ENCODE measurements at regions of chr15 and their contacts with region 1.

Region 1: DNA sequence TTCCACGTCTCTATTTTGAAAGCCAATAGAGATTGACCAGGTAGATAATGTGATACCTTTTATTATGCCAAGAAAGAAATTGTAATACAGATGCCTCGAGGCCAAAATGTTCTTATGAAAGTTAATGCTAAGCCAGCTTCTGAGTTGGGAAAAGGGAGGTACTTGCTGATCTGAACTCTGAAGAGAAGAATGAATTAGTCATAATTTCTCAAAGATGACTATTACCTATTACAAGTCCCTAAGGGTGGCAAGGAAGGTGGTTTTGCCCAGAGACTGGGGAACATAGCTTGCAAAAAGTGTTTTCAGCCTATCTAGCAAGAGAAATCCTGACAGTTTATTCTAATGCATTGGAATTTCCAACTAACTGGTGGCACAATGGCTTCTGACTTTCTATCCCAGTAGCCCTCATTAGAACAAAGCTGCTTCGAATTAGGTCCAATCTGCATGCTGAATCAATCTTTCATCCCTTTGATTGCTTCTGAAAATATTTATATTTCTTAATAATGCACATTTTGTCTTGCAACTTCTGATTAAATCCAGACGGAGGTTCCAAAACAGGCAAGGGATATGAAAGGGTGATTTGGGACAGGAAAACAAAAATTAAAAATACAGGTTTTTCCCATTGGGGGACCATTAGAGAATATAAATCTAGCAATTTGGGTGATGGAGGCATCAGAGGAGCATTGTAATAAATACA is 17.7 kb upstream of the NR2F2 start:
- DNase-seq: peak in 1 of 2 experiments; percentile 85
- H3K4me3 ChIP-seq: no peak overlapping the region
- H3K27ac ChIP-seq: peak overlapping the region; percentile 51
- H3K4me1 ChIP-seq: peaks cover 17% of the 10 kb centered on the region
- H3K27me3 ChIP-seq: no peaks in the 10 kb centered on the region
- CTCF ChIP-seq: no peak

Region 2: GRCh38 chr15:96585484-96586386 is 272.9 kb after region 1 on chr15:
- CTCF ChIA-PET with region 1: interaction called, 13 read pairs
- POLR2A ChIA-PET with region 1: no interaction called
- intact Hi-C with region 1: no loop called
- DNase-seq: no peak
- H3K4me3 ChIP-seq: no peak overlapping the region
- H3K27ac ChIP-seq: no peak overlapping the region
- H3K4me1 ChIP-seq: no peaks in the 10 kb centered on the region
- H3K27me3 ChIP-seq: no peaks in the 10 kb centered on the region
- CTCF ChIP-seq: peak; percentile 37; the same call in 1 of the 2 replicates

Measured in PC-9 (cell line).